ENCODE measurements at regions of chr11 and their contacts with region 1.

Region 1: GRCh38 chr11:121655537-121656327 is 203.0 kb upstream of the SORL1-AS1 start:
- DNase-seq: peak; percentile 88
- H3K4me3 ChIP-seq: peak overlapping the region; percentile 66
- H3K27ac ChIP-seq: peak overlapping the region; percentile 92
- H3K4me1 ChIP-seq: peaks cover 21% of the 10 kb centered on the region
- H3K27me3 ChIP-seq: no peaks in the 10 kb centered on the region
- CTCF ChIP-seq: peak; percentile 84

Region 2: GRCh38 chr11:121688055-121688491 is 32.3 kb after region 1 on chr11:
- intact Hi-C with region 1: no loop called
- DNase-seq: no peak
- H3K4me3 ChIP-seq: no peak overlapping the region
- H3K27ac ChIP-seq: no peak overlapping the region
- H3K4me1 ChIP-seq: no peaks in the 10 kb centered on the region
- H3K27me3 ChIP-seq: no peaks in the 10 kb centered on the region
- CTCF ChIP-seq: no peak

Region 3: GRCh38 chr11:121722431-121723245 is 66.9 kb after region 1 on chr11:
- intact Hi-C with region 1: no loop called
- DNase-seq: peak; percentile 80
- H3K4me3 ChIP-seq: peak overlapping the region; percentile 67
- H3K27ac ChIP-seq: peak overlapping the region; percentile 89
- H3K4me1 ChIP-seq: peaks cover 18% of the 10 kb centered on the region
- H3K27me3 ChIP-seq: no peaks in the 10 kb centered on the region
- CTCF ChIP-seq: peak; percentile 24

Region 4: GRCh38 chr11:122108192-122108799 is 452.6 kb after region 1 on chr11:
- intact Hi-C with region 1: loop called (anchors 10 kb)
- DNase-seq: no peak
- H3K4me3 ChIP-seq: no peak overlapping the region
- H3K27ac ChIP-seq: peak overlapping the region; percentile 81
- H3K4me1 ChIP-seq: peaks cover 28% of the 10 kb centered on the region
- H3K27me3 ChIP-seq: no peaks in the 10 kb centered on the region
- CTCF ChIP-seq: peak; percentile 60

Region 5: GRCh38 chr11:122202951-122203456 is 547.3 kb after region 1 on chr11:
- intact Hi-C with region 1: loop called (anchors 5 kb)
- DNase-seq: peak; percentile 66
- H3K4me3 ChIP-seq: peak overlapping the region; percentile 57
- H3K27ac ChIP-seq: peak overlapping the region; percentile 36
- H3K4me1 ChIP-seq: peaks cover 36% of the 10 kb centered on the region
- H3K27me3 ChIP-seq: no peaks in the 10 kb centered on the region
- CTCF ChIP-seq: peak; percentile 98